Gastrocnemius medialis (tissue), 4 donors: ENCODE measurements at regions of chr3 and their contacts with region 1.

Region 1: GRCh38 chr3:9932843-9933560 is 632 bp upstream of the CRELD1 start:
- DNase-seq: peak; percentile 55 to 83
- ATAC-seq: peak; percentile 70 to 71
- H3K4me3 ChIP-seq: peak overlapping the region; percentile 85 to 94 (median 88)
- H3K27ac ChIP-seq: peak overlapping the region; percentile 88 to 97 (median 96)
- H3K4me1 ChIP-seq: peaks cover 27 to 29% of the 10 kb centered on the region in 2 donors
- H3K27me3 ChIP-seq: no peaks in the 10 kb centered on the region
- CTCF ChIP-seq: peak; percentile 78 to 90 (median 89)
- POLR2A ChIP-seq: no peak

Region 2: DNA sequence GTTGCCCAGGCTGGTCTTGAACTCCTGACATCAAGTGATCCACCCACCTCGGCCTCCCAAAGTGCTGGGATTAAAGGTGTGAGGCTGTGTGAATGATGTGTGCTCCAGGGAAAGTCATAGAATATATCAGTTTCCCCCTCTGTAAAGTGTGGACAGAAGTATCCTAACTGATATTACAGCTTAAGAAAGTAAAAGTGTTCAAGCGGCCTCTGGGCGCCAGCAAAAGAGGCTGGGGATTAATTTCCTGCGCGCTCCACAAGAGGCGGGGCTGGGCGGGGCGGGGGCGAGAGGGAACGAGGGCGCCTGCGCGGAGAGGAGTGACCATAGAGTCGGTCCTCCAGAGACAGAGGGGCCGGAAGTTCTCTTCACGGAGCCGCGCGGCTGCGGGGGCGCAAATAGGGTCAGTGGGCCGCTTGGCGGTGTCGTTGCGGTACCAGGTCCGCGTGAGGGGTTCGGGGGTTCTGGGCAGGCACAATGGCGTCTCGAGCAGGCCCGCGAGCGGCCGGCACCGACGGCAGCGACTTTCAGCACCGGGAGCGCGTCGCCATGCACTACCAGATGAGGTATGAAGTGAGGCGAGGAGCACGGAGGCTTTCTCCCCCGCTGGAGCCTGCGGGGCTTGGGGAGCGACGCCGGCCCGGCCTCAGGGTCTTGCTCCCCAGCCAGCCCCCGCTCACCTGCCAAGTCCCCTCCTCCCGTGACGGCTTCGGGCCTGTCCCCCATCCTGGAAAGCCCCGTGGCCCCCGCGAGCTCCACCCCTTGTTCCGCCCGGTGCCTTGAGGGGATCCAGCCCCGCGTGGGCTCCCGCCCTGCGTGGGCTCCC is 42.5 kb before region 1 on chr3 and contains the start of gene JAGN1:
- in situ Hi-C with region 1: no loop called
- intact Hi-C with region 1: loop called (anchors 1 kb)
- DNase-seq: peak; percentile 83 to 86
- ATAC-seq: peak; percentile 97 to 98
- H3K4me3 ChIP-seq: peak within 1 kb of the TSS; percentile 65 to 100 (median 88)
- H3K27ac ChIP-seq: peak within 1 kb of the TSS; percentile 93 to 100 (median 96)
- H3K4me1 ChIP-seq: peaks cover 7 to 11% of the 10 kb centered on the region in 2 donors
- H3K27me3 ChIP-seq: no peaks in the 10 kb centered on the region
- CTCF ChIP-seq: no peak
- POLR2A ChIP-seq: peak; percentile 91 to 93
- total RNA-seq, gene JAGN1: 42.8 to 96.4 (median 67.0) TPM

Region 3: DNA sequence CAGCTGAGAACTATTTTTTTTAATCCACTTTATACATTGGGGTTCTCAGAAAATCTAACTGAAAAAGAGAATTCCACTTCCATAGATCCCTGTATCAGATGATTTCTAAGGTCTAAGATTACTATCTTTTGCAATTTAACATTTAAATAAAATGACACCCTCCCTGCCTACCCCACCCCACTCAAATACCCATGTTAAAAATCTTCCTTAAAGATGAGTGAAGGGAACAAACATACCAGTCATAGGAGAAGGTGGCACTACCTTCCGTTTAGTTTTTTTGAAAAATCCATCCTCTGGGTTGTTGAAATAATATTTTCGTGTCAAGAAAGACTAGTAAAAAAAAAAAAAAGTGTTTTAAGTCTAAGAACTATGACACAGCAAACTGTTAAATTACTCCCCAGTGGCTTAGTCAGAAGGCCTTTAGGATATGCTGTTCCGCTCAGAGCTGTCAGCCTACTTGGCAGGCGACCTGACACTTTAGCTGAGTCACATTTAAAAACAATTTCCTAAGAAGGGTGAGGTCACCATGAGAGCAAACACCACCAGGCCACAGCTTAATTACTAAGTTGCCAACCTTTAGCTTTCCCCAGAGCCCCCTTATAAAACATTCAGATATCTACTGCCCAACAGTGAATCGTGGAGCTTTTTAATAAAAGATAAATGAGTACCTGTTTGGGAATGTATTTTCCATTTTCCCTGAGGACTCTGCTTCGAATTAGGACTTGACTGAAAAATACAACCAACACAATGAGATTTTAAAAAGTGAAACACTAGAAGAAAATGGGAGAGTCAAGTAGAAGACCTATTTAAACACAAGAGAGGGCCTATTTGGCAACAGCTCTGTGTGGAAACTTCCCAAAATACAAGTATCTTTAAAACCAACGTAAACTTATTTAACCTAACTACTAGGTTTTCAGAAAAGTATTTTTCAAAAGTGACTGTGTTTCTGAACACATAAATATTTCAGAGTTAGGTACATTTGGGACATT is 44.0 kb after region 1 on chr3:
- in situ Hi-C with region 1: no loop called
- intact Hi-C with region 1: loop called (anchors 2 kb)
- DNase-seq: peak; percentile 83 to 93
- ATAC-seq: peak; percentile 98 to 99
- H3K4me3 ChIP-seq: peak overlapping the region; percentile 23 to 56 (median 50)
- H3K27ac ChIP-seq: peak overlapping the region; percentile 89 to 96 (median 90)
- H3K4me1 ChIP-seq: peaks cover 36 to 54% of the 10 kb centered on the region in 2 donors
- H3K27me3 ChIP-seq: no peaks in the 10 kb centered on the region
- CTCF ChIP-seq: no peak
- POLR2A ChIP-seq: peak; percentile 36 to 37

Region 4: GRCh38 chr3:10026084-10026890 is 93.3 kb after region 1 on chr3 and contains the start of gene FANCD2:
- in situ Hi-C with region 1: loop called in 1 of 4 experiments (anchors 10 kb)
- intact Hi-C with region 1: loop called (anchors 2 kb)
- DNase-seq: peak; percentile 60 to 82
- ATAC-seq: peak; percentile 94 to 95
- H3K4me3 ChIP-seq: peak within 1 kb of the TSS; percentile 63 to 90 (median 80)
- H3K27ac ChIP-seq: peak within 1 kb of the TSS; percentile 78 to 82 (median 80)
- H3K4me1 ChIP-seq: peaks cover 17 to 20% of the 10 kb centered on the region in 2 donors
- H3K27me3 ChIP-seq: no peaks in the 10 kb centered on the region
- CTCF ChIP-seq: no peak
- POLR2A ChIP-seq: peak; percentile 67 to 76
- total RNA-seq, gene FANCD2: 0.46 to 1.3 (median 0.58) TPM in 3 of 4 donors, not detected in the other

Region 5: GRCh38 chr3:10142707-10143566 is 209.9 kb after region 1 on chr3:
- in situ Hi-C with region 1: no loop called
- intact Hi-C with region 1: loop called (anchors 10 kb)
- DNase-seq: peak in 1 of 2 donors; percentile 22
- ATAC-seq: no peak
- H3K4me3 ChIP-seq: peak overlapping the region; percentile 75 to 86 (median 81)
- H3K27ac ChIP-seq: peak overlapping the region; percentile 89 to 93 (median 92)
- H3K4me1 ChIP-seq: peaks cover 22 to 36% of the 10 kb centered on the region in 2 donors
- H3K27me3 ChIP-seq: no peaks in the 10 kb centered on the region
- CTCF ChIP-seq: no peak
- POLR2A ChIP-seq: no peak